AG04450 (cell line): ENCODE measurements at regions of chr18 and their contacts with region 1.

Region 1: GRCh38 chr18:23259701-23260582 is 124.7 kb downstream of the CABLES1 start:
- DNase-seq: peak; percentile 37
- H3K4me3 ChIP-seq: 0 out of 2 replicates have a peak overlapping the region, but pooled peaks have one; percentile 13
- H3K27ac ChIP-seq: peak overlapping the region; percentile 84
- H3K27me3 ChIP-seq: no peaks in the 10 kb centered on the region
- CTCF ChIP-seq: no peak

Region 2: DNA sequence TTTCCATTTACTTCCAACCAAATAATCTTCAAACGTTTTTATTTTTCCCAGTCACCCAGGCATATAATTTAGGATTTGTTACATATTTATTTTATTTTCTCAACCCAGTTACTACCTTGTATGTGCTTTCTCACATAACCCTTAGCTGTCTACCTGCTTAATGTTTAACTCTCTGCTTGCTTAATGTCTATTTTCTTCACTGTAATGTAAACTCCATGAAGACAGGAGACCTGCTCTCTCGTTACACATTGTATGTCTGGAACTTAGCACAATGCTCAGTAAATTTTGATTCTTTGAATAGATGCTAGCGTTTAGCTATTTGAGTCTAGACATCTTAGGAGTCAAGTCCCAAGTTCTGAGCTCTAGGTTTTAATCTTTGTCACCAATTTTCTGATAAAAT is 256.7 kb before region 1 on chr18:
- CTCF ChIA-PET with region 1: no interaction called
- POLR2A ChIA-PET with region 1: interaction called, 10 read pairs
- DNase-seq: no peak
- H3K4me3 ChIP-seq: no peak overlapping the region
- H3K27ac ChIP-seq: no peak overlapping the region
- H3K27me3 ChIP-seq: no peaks in the 10 kb centered on the region
- CTCF ChIP-seq: no peak

Region 3: DNA sequence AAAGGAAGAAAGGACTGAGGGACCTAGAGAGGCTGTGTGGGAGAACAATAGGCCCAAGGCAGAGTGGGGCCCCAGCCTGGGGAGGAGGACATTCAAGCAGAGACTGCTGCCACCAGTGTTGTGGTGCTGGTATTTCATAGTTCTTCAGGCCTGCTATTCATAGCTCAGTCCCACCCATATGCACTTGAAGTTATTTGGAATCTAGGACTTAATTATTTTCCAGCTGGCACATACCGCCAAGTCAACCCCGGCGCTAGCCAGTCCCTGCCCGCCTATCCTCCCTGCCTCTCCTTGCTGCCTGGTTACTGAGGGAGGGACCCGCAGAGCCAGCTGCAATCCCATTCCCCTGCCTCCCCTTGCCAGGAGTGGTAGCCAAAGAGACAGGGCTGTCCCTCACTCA is 16.5 kb after region 1 on chr18:
- CTCF ChIA-PET with region 1: no interaction called
- POLR2A ChIA-PET with region 1: no interaction called
- DNase-seq: no peak
- H3K4me3 ChIP-seq: no peak overlapping the region
- H3K27ac ChIP-seq: no peak overlapping the region
- H3K27me3 ChIP-seq: no peaks in the 10 kb centered on the region
- CTCF ChIP-seq: no peak